Activated T-helper 1 cell treated with anti-CD3 and anti-CD28 coated beads, Interleukin-12 subunit alpha, Interleukin-12 subunit beta, Interleukin-2, Interleukin-4 antibody, amounts not matched to agents 30 ng/mL and 10 ng/mL and 1 ng/mL, durations not matched to agents 14 hours and 24 hours and 36 hours (primary cell): ENCODE measurements at regions of chr19 and their contacts with region 1.

Region 1: GRCh38 chr19:1767464-1767933 is 14.2 kb downstream of the ONECUT3 start:
- DNase-seq: peak; percentile 42
- H3K4me3 Mint-ChIP-seq: no peak overlapping the region
- H3K27ac Mint-ChIP-seq: no peak overlapping the region
- H3K4me1 Mint-ChIP-seq: no peaks in the 10 kb centered on the region
- H3K27me3 Mint-ChIP-seq: peaks cover 66% of the 10 kb centered on the region

Region 2: GRCh38 chr19:656751-657559 is 1110.5 kb before region 1 on chr19:
- intact Hi-C with region 1: no loop called
- DNase-seq: no peak
- H3K4me3 Mint-ChIP-seq: no peak overlapping the region
- H3K27ac Mint-ChIP-seq: no peak overlapping the region
- H3K4me1 Mint-ChIP-seq: peaks cover 19% of the 10 kb centered on the region
- H3K27me3 Mint-ChIP-seq: no peaks in the 10 kb centered on the region

Region 3: GRCh38 chr19:1672038-1672768 is 95.3 kb before region 1 on chr19:
- intact Hi-C with region 1: loop called (anchors 5 kb)
- DNase-seq: peak; percentile 46
- H3K4me3 Mint-ChIP-seq: no peak overlapping the region
- H3K27ac Mint-ChIP-seq: no peak overlapping the region
- H3K4me1 Mint-ChIP-seq: peaks cover 5% of the 10 kb centered on the region
- H3K27me3 Mint-ChIP-seq: peaks cover 48% of the 10 kb centered on the region

Region 4: DNA sequence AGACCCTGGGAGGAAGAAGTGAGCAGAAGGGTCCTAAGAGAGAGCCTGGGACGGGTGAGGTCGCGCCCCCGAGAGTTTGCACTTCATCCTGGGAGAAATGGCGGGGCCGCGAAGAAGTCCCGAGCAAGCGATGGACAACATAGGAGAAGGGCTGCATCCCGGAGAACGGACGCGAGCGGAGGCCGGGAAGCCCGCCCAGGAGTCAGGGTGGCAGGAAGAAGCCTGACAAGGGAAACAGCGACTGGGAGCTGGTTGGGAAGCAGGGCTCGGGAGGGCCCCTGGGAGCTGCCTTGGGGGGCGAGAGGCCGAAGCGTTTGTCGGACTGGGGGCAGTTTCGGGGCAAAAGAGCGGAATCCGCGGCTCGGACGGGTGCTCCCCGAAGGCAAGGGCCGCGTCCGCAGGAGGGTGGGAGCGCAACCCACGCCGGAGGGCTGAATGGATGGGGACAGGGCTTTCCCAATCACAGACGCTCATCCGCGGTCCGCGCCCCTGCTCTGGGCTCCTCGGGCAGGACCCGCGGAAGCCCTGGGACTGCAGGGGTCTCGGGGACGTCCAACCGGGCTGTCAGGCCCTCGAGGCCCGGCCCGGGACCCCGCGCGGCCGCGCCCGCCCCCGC is 117.3 kb after region 1 on chr19:
- intact Hi-C with region 1: no loop called
- DNase-seq: no peak
- H3K4me3 Mint-ChIP-seq: peak overlapping the region; percentile 99
- H3K27ac Mint-ChIP-seq: peak overlapping the region; percentile 99
- H3K4me1 Mint-ChIP-seq: peaks cover 28% of the 10 kb centered on the region
- H3K27me3 Mint-ChIP-seq: no peaks in the 10 kb centered on the region

Region 5: DNA sequence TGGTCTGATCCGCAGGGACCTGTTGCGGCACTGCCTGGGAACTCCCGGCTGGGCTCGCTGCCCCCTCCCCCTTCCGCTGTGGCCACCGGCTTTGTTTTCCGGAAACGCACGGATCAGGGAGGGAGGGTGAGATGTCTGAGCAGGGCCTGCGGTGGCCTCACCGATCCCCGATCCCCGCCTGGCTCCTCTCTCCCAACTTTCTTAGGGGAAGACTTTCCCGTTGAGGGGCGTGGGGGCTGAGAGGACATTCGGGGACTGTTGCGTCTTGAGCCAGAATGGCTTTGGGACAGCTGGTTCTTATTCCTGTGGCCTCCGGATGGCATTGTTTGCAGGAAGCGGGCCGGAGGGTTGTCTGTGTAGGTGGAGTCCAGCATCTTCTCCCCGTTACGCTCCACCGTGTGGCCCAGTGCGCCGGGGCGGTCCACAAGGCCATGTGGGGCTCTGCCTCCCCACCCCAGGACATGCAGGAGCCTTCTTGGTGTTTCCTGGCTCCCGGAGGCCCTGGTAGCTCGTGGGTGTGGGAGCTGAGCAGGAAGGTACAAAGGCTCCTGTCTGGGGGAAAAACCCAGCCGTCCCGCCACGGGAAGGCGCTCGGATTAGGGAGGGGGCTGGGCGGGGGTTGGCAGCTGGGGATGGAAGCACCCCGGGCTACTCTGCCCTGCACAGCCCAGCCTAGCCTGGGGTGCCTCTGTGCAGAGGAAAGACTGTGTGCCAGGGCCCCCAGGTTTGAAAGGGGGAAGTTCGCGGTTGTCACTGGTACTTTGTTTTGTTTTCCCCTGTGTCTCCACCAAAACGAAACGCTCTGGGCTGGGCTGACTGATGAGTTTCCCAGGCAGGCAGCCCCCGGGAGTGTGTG is 174.8 kb after region 1 on chr19:
- intact Hi-C with region 1: no loop called
- DNase-seq: peak; percentile 82
- H3K4me3 Mint-ChIP-seq: peak overlapping the region; percentile 95
- H3K27ac Mint-ChIP-seq: peak overlapping the region; percentile 93
- H3K4me1 Mint-ChIP-seq: peaks cover 30% of the 10 kb centered on the region
- H3K27me3 Mint-ChIP-seq: no peaks in the 10 kb centered on the region